Activated CD4-positive, alpha-beta T cell treated with anti-CD3 and anti-CD28 coated beads, Interleukin-2, amount 10 ng/mL, durations not matched to agents 24 days and 14 days (primary cell): ENCODE measurements at regions of chr2 and their contacts with region 1.

Region 1: DNA sequence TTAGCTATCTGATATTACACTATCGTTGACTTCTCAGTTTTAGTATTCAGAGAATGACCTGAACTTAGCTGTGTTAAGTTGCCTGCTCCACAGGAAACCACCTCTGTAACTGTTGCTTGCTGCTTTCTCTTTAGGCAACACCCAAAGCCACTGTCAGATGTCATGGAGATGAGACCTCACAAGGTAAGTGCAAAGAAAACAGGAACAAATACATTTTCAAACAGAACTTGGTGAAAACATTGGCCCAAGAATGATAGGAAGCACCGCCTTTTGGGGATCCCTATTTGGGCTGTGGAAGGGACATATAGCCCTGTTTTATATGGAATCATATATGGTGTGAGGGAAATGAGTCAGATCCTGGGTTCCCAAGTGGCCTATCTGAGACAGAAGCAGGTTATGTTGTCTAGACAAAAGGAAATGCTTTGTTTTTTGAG is 143.4 kb downstream of the UBE2E3 start:
- DNase-seq: peak; percentile 93
- H3K4me3 Mint-ChIP-seq: peak overlapping the region; percentile 70
- H3K27ac Mint-ChIP-seq: peak overlapping the region; percentile 90
- H3K4me1 Mint-ChIP-seq: peaks cover 55% of the 10 kb centered on the region
- H3K27me3 Mint-ChIP-seq: no peaks in the 10 kb centered on the region

Region 2: DNA sequence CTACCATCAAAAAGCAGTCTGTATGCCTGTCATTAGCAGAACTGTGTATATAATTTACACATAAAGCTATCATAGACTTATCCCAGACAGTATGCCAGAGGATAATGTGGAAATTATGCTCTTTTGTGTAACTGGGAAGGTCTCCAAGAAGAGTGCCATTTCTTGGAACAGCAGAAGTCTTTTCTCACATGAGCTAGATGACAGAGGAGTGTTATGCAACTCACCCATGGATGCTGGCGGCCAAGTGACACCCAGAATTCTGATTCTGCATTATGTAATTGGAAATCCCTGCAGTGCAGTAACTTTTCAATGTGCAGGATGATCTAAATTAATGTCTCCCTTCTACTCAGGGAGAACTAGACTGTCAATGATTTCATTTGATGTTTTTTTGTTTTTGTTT is 16.6 kb after region 1 on chr2:
- intact Hi-C with region 1: loop called (anchors 1 kb)
- DNase-seq: no peak
- H3K4me3 Mint-ChIP-seq: peak overlapping the region; percentile 79
- H3K27ac Mint-ChIP-seq: peak overlapping the region; percentile 80
- H3K4me1 Mint-ChIP-seq: peaks cover 56% of the 10 kb centered on the region
- H3K27me3 Mint-ChIP-seq: no peaks in the 10 kb centered on the region

Region 3: GRCh38 chr2:181165199-181165868 is 41.5 kb after region 1 on chr2:
- intact Hi-C with region 1: loop called (anchors 2 kb)
- DNase-seq: peak; percentile 81
- H3K4me3 Mint-ChIP-seq: peak overlapping the region; percentile 58
- H3K27ac Mint-ChIP-seq: peak overlapping the region; percentile 93
- H3K4me1 Mint-ChIP-seq: peaks cover 36% of the 10 kb centered on the region
- H3K27me3 Mint-ChIP-seq: no peaks in the 10 kb centered on the region

Region 4: GRCh38 chr2:181197140-181197760 is 73.4 kb after region 1 on chr2:
- intact Hi-C with region 1: loop called (anchors 2 kb)
- DNase-seq: peak; percentile 57
- H3K4me3 Mint-ChIP-seq: peak overlapping the region; percentile 48
- H3K27ac Mint-ChIP-seq: peak overlapping the region; percentile 88
- H3K4me1 Mint-ChIP-seq: peaks cover 45% of the 10 kb centered on the region
- H3K27me3 Mint-ChIP-seq: no peaks in the 10 kb centered on the region

Region 5: GRCh38 chr2:181223234-181223633 is 99.4 kb after region 1 on chr2:
- intact Hi-C with region 1: loop called (anchors 5 kb)
- DNase-seq: peak; percentile 59
- H3K4me3 Mint-ChIP-seq: peak overlapping the region; percentile 71
- H3K27ac Mint-ChIP-seq: peak overlapping the region; percentile 96
- H3K4me1 Mint-ChIP-seq: peaks cover 29% of the 10 kb centered on the region
- H3K27me3 Mint-ChIP-seq: no peaks in the 10 kb centered on the region

Region 6: DNA sequence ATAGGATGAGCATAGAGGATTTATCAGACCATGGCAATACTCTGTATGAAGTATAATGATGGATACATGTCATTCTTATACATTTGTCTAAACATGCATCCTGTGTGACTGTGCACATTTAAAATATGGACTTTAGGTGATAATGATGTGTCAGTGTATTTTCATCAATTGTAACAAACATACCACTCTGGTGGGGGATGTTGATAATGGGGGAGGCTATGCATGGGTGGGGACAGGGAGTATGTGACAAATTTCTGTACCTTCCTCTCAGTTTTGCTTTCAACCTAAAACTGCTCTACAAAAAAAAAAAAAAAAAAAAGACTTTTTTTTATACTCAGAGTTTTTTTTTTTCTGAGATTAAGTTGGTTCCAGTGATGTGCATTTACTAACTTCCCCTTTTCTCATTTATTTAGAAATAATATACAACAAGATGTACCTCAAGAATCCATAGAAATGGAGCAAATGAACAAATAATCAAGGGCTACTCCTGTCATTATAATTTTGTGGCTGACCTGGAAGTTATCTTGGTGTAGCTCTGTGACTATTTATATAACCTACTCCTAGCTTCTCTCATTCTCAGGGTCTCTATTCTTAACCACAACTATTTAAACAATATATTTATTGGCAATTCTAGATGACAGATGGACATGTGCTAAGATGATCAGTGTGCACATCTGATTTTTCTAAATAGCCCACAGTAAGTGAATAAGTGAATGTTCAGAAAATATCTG is 224.5 kb after region 1 on chr2:
- intact Hi-C with region 1: no loop called
- DNase-seq: no peak
- H3K4me3 Mint-ChIP-seq: no peak overlapping the region
- H3K27ac Mint-ChIP-seq: no peak overlapping the region
- H3K4me1 Mint-ChIP-seq: peaks cover 15% of the 10 kb centered on the region
- H3K27me3 Mint-ChIP-seq: no peaks in the 10 kb centered on the region